ENCODE measurements at regions of chr1 and their contacts with region 1.

Region 1: GRCh38 chr1:214123061-214123784 is 135.4 kb downstream of the PROX1 start:
- DNase-seq: no peak
- ATAC-seq: peak; percentile 72

Region 2: GRCh38 chr1:213244664-213245091 is 878.5 kb before region 1 on chr1:
- intact Hi-C with region 1: loop called (anchors 2 kb)
- DNase-seq: no peak
- ATAC-seq: no peak

Region 3: GRCh38 chr1:213374369-213374768 is 748.9 kb before region 1 on chr1:
- intact Hi-C with region 1: loop called (anchors 5 kb)
- DNase-seq: no peak
- ATAC-seq: peak; percentile 71

Region 4: DNA sequence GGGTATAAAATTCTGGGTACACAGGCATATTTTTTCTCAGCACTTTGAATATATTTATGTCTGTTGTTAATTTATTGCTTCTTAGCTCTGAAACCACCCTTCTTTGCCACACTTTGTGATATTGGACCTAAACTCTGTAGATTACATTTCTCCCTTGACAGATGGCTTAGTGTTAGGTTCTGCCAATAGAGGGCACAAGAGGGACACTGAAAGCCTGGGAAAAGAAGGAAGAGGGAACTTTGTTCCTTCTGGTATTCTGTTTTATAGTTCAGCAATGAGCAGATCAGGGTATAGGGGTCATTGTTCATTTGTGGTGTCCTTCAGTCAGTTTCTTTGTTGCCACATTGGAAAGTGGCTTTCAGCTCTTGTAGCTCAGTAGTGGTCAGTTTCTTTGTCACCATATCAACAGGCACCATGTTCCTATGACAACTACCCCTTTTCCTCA is 559.0 kb before region 1 on chr1:
- intact Hi-C with region 1: loop called (anchors 2 kb)
- DNase-seq: no peak
- ATAC-seq: no peak

Region 5: DNA sequence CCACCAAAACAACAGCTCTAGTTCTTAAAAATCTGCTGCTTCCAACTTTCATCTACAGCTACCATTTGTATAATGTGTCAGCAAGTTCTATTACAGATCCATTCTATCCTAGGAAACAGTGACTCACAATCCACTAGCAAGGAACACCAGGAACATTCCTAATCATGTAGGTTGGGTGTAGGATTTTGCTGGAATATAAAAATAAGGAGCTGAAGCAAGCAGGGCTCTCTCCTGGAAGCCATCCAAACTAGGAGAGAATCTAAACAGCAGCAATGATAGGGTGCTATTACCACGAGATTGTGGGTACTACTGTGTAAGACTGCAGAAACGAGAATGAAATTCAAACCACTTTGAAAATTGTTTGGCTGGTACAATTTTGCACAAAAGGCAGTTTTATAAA is 293.2 kb after region 1 on chr1:
- intact Hi-C with region 1: no loop called
- DNase-seq: no peak
- ATAC-seq: no peak

Measured in Right ventricle myocardium inferior (tissue), 1 donor.